ENCODE measurements at regions of chr14 and their contacts with region 1.

Region 1: GRCh38 chr14:69460093-69460701 is 24.3 kb upstream of the PLEKHD1 start:
- DNase-seq: peak; percentile 20 to 66
- ATAC-seq: peak; percentile 99
- H3K4me3 ChIP-seq: no peak overlapping the region
- H3K27ac ChIP-seq: no peak overlapping the region
- H3K4me1 ChIP-seq: no peaks in the 10 kb centered on the region
- H3K27me3 ChIP-seq: no peaks in the 10 kb centered on the region
- CTCF ChIP-seq: peak; percentile 70 to 74 (median 73)
- POLR2A ChIP-seq: no peak

Region 2: DNA sequence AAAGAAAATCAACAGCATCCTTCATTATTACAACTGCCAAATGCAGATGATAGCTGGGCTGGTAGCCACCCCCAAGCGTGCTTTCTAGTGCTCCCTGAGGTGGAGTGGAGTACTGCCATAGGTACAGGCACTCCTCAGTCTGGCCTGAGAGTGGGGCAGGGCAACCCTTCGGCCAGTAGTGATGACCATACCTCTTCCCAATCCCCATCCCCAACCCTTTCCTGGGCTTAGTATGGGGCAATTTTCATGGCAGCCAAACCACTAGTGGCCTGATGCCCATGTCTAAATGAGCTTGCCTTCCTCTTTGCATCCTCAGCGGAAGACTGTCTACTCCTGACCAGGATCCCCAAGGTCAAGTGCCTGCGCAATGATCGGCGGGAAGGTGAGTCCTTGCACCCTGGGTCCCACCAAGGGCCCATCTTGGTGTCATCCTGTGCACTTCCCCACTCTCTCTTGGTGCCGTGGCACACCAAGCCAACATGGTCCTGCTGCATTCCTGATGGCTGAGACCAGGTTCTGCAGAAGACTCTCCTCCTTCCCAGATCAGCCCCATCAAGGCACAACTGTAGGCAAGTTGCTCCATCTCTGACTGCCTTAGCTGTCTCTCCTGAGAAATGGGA is 134.4 kb before region 1 on chr14:
- in situ Hi-C with region 1: no loop called
- intact Hi-C with region 1: no loop called
- DNase-seq: no peak
- ATAC-seq: no peak
- H3K4me3 ChIP-seq: no peak overlapping the region
- H3K27ac ChIP-seq: no peak overlapping the region
- H3K4me1 ChIP-seq: no peaks in the 10 kb centered on the region
- H3K27me3 ChIP-seq: no peaks in the 10 kb centered on the region
- CTCF ChIP-seq: no peak
- POLR2A ChIP-seq: no peak

Region 3: GRCh38 chr14:69398053-69398817 is 62.0 kb before region 1 on chr14 and contains the starts of genes ERH and SLC39A9:
- in situ Hi-C with region 1: no loop called
- intact Hi-C with region 1: loop called (anchors 2 kb)
- DNase-seq: peak; percentile 94 to 96
- ATAC-seq: peak; percentile 99
- H3K4me3 ChIP-seq: peak within 1 kb of the TSS; percentile 82 to 91 (median 84)
- H3K27ac ChIP-seq: peak within 1 kb of the TSS; percentile 89 to 94 (median 91)
- H3K4me1 ChIP-seq: peaks cover 37 to 42% of the 10 kb centered on the region in 2 donors
- H3K27me3 ChIP-seq: no peaks in the 10 kb centered on the region
- CTCF ChIP-seq: no peak
- POLR2A ChIP-seq: peak; percentile 59 to 71
- total RNA-seq, gene ERH: 46.7 to 49.2 (median 48.1) TPM
- total RNA-seq, gene SLC39A9: 20.6 to 23.2 (median 21.8) TPM

Measured in gastrocnemius medialis (tissue), 4 donors.